Ascending aorta (tissue), 2 donors: ENCODE measurements at regions of chr4 and their contacts with region 1.

Region 1: GRCh38 chr4:112327965-112328733 is 31.0 kb downstream of the ALPK1 start:
- DNase-seq: no peak
- H3K4me3 ChIP-seq: no peak overlapping the region
- H3K27ac ChIP-seq: no peak overlapping the region
- H3K4me1 ChIP-seq: no peaks in the 10 kb centered on the region
- H3K27me3 ChIP-seq: no peaks in the 10 kb centered on the region
- CTCF ChIP-seq: peak in 1 of 3 experiments; percentile 37

Region 2: DNA sequence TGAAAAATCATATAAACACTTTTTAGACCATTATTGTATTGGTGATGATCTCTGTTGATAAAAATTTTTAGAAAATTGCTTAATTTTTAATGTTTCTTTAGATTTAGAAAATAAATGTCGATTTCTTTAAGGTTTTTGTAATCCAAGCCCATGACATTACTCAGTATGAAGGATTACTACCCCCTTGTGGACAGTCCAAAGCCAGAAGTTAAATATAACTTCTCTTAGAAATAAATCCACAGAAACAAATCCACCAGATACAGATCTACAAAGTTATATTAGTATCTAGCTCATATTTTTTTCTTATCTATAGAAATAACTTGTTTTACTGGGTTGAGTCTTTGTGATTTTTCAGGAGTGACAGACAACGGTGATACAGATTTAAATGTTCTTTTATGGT is 61.3 kb before region 1 on chr4:
- intact Hi-C with region 1: no loop called
- DNase-seq: no peak
- H3K4me3 ChIP-seq: no peak overlapping the region
- H3K27ac ChIP-seq: no peak overlapping the region
- H3K4me1 ChIP-seq: no peaks in the 10 kb centered on the region
- H3K27me3 ChIP-seq: no peaks in the 10 kb centered on the region
- CTCF ChIP-seq: peak in 2 of 3 experiments; percentile 30 to 56

Region 3: DNA sequence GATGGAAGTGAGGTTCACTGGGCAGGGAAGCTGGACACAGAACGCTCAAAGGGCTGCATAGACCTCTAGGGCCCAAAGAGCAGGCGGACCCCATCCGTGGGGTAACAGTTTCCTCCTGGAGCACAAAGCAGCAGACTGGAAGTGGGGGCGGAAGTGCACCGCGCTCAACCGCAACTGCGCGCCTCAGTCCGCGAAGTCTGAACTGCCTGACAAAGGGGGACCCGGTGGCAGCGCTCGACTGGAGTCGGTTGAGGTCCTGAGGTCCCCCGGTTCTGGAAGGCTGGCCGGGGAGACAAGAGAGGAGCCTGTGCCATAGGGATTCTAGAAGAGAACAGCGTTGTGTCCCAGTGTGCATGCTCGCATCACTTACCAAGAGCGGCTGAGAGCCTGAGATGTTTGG is 27.5 kb after region 1 on chr4:
- intact Hi-C with region 1: no loop called
- DNase-seq: no peak
- H3K4me3 ChIP-seq: no peak overlapping the region
- H3K27ac ChIP-seq: no peak overlapping the region
- H3K4me1 ChIP-seq: no peaks in the 10 kb centered on the region
- H3K27me3 ChIP-seq: no peaks in the 10 kb centered on the region
- CTCF ChIP-seq: no peak

Region 4: GRCh38 chr4:112523764-112524505 is 195.8 kb after region 1 on chr4:
- intact Hi-C with region 1: loop called (anchors 10 kb)
- DNase-seq: peak in 1 of 2 donors; percentile 66
- H3K4me3 ChIP-seq: peak overlapping the region; percentile 46 to 58
- H3K27ac ChIP-seq: no peak overlapping the region
- H3K4me1 ChIP-seq: no peaks in the 10 kb centered on the region
- H3K27me3 ChIP-seq: peaks cover 37% of the 10 kb centered on the region
- CTCF ChIP-seq: peak; percentile 23 to 61 (median 34)

Region 5: GRCh38 chr4:112604589-112604988 is 276.4 kb after region 1 on chr4:
- intact Hi-C with region 1: loop called (anchors 5 kb)
- DNase-seq: no peak
- H3K4me3 ChIP-seq: no peak overlapping the region
- H3K27ac ChIP-seq: no peak overlapping the region
- H3K4me1 ChIP-seq: no peaks in the 10 kb centered on the region
- H3K27me3 ChIP-seq: no peaks in the 10 kb centered on the region
- CTCF ChIP-seq: peak; percentile 26 to 58 (median 37)